ENCODE measurements at regions of chr17 and their contacts with region 1.

Region 1: DNA sequence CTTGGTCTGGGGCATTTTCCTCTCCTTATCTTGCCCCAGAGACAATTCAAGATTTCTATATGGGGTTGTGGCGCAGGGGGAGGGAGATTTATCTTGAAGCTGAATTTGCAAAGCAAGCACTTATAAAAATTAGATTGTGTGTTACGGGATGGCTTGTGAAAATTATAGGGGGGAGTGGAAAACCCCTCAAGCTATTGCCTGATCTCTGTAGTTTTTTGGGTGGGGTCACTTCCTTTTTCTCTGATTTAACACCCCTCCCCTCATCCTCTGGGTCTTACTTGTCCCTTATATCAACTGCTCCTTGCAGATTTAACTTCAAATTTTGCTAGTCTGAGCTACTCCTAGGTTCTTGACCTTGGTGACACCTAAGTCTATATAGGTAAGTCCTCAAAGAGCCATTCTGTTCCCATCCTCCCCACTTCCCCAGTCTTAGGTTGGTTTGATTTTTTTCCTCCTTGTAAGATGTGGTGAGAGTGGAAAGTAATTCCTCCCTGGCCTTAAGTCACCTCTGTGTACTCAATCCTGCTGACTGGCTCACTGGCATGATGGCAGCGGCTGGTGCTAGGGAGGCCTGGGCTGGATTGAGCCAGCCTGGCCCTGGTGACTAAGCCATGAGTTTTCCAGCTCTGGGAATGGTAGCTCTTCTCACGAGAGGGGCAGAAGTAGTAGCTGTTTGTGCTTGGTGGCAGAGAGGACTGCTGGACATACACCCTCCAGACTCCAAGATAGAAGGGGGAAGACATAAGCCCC is 2.3 kb downstream of the ARL4D start:
- DNase-seq: no peak
- H3K4me3 ChIP-seq: peak overlapping the region; percentile 28 to 91 (median 73)
- H3K27ac ChIP-seq: no peak overlapping the region
- H3K4me1 ChIP-seq: no peaks in the 10 kb centered on the region
- H3K27me3 ChIP-seq: no peaks in the 10 kb centered on the region
- CTCF ChIP-seq: no peak
- POLR2A ChIP-seq: no peak

Region 2: GRCh38 chr17:43483674-43484372 is 82.7 kb after region 1 on chr17 and contains the start of gene DHX8:
- intact Hi-C with region 1: loop called (anchors 2 kb)
- DNase-seq: peak; percentile 96 to 98
- H3K4me3 ChIP-seq: peak within 1 kb of the TSS; percentile 78 to 79 (median 78)
- H3K27ac ChIP-seq: peak within 1 kb of the TSS; percentile 81 to 86
- H3K4me1 ChIP-seq: peaks cover 0 to 14% of the 10 kb centered on the region in 2 donors
- H3K27me3 ChIP-seq: no peaks in the 10 kb centered on the region
- CTCF ChIP-seq: peak; percentile 100
- POLR2A ChIP-seq: peak; percentile 40
- total RNA-seq, gene DHX8: 32.5 to 44.1 (median 42.0) TPM

Region 3: GRCh38 chr17:44293509-44294226 is 892.5 kb after region 1 on chr17:
- intact Hi-C with region 1: loop called (anchors 10 kb)
- DNase-seq: no peak
- H3K4me3 ChIP-seq: no peak overlapping the region
- H3K27ac ChIP-seq: no peak overlapping the region
- H3K4me1 ChIP-seq: no peaks in the 10 kb centered on the region
- H3K27me3 ChIP-seq: no peaks in the 10 kb centered on the region
- CTCF ChIP-seq: no peak
- POLR2A ChIP-seq: no peak